ENCODE measurements at regions of chr17 and their contacts with region 1.

Region 1: GRCh38 chr17:59106463-59107305 is at the start of gene TRIM37:
- DNase-seq: peak; percentile 97 to 100 (median 98)
- ATAC-seq: peak; percentile 94
- H3K4me3 ChIP-seq: peak within 1 kb of the TSS; percentile 95
- H3K4me3 Mint-ChIP-seq: peak within 1 kb of the TSS; percentile 93
- H3K27ac ChIP-seq: peak within 1 kb of the TSS; percentile 91
- H3K27ac Mint-ChIP-seq: peak within 1 kb of the TSS; percentile 88
- H3K4me1 ChIP-seq: peaks cover 13% of the 10 kb centered on the region
- H3K4me1 Mint-ChIP-seq: peaks cover 41% of the 10 kb centered on the region
- H3K27me3 ChIP-seq: no peaks in the 10 kb centered on the region
- H3K27me3 Mint-ChIP-seq: no peaks in the 10 kb centered on the region
- CTCF ChIP-seq: no peak
- total RNA-seq, gene TRIM37: 16.8 to 18.0 TPM

Region 2: DNA sequence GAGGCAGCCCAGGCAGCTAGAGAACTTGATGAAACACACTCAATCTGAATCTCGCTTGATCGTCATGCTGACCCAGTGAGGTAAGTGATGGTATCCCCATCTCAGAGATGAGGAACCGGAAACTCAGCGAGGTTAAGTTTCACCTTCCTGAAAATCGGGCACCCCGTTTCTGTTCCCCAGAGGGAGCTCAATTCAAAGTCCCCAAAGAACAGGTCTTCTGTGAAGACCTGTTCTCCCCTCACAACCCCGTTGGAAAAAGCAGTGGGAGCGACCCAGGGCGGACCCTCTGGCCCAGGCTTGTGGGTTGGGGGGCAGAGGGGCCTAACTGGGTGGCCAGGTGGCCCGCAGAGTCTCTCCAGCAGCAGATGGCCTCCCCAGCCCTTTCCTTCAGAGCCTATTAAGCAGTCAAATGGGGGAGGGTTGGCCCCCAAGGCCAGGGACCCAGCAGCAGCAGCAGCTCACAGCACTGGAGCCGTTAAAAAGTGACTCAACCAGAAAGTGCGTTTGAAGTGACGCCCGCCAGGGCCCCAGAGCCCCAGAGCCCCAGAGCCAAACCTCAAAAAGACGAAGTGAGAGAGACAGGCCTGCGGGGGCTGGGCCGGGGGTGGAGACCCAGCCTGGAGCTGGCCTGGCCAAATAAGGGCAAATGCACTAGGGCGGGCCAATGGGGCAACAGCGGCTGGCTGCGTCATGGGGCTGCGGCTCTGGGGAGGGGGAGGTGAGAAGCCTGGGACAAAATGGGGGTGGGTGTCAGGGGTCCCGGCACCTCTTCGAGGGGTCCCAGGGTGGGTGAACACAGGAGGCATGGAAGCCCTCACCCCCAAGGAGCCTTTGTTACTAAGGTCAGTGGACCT is 768.9 kb before region 1 on chr17:
- CTCF ChIA-PET with region 1: no interaction called
- POLR2A ChIA-PET with region 1: interaction called, 3 read pairs
- intact Hi-C with region 1: loop called in 1 of 2 experiments (anchors 10 kb)
- DNase-seq: peak; percentile 78 to 96 (median 88)
- ATAC-seq: peak; percentile 73
- H3K4me3 ChIP-seq: peak overlapping the region; percentile 84
- H3K4me3 Mint-ChIP-seq: peak overlapping the region; percentile 90
- H3K27ac ChIP-seq: peak overlapping the region; percentile 97 to 98
- H3K27ac Mint-ChIP-seq: peak overlapping the region; percentile 84
- H3K4me1 ChIP-seq: peaks cover 96% of the 10 kb centered on the region
- H3K4me1 Mint-ChIP-seq: peaks cover 92% of the 10 kb centered on the region
- H3K27me3 ChIP-seq: no peaks in the 10 kb centered on the region
- H3K27me3 Mint-ChIP-seq: no peaks in the 10 kb centered on the region
- CTCF ChIP-seq: no peak

Region 3: GRCh38 chr17:58692239-58693055 is 414.2 kb before region 1 on chr17 and contains the start of gene RAD51C:
- CTCF ChIA-PET with region 1: no interaction called
- POLR2A ChIA-PET with region 1: interaction called, 6 read pairs
- intact Hi-C with region 1: loop called in 1 of 2 experiments (anchors 5 kb)
- DNase-seq: peak; percentile 70 to 92 (median 84)
- ATAC-seq: peak; percentile 96
- H3K4me3 ChIP-seq: peak within 1 kb of the TSS; percentile 79
- H3K4me3 Mint-ChIP-seq: peak within 1 kb of the TSS; percentile 93
- H3K27ac ChIP-seq: peak within 1 kb of the TSS; percentile 66 to 83
- H3K27ac Mint-ChIP-seq: peak within 1 kb of the TSS; percentile 86
- H3K4me1 ChIP-seq: peaks cover 13% of the 10 kb centered on the region
- H3K4me1 Mint-ChIP-seq: peaks cover 28% of the 10 kb centered on the region
- H3K27me3 ChIP-seq: no peaks in the 10 kb centered on the region
- H3K27me3 Mint-ChIP-seq: no peaks in the 10 kb centered on the region
- CTCF ChIP-seq: no peak
- total RNA-seq, gene RAD51C: 10.4 to 11.6 TPM

Region 4: DNA sequence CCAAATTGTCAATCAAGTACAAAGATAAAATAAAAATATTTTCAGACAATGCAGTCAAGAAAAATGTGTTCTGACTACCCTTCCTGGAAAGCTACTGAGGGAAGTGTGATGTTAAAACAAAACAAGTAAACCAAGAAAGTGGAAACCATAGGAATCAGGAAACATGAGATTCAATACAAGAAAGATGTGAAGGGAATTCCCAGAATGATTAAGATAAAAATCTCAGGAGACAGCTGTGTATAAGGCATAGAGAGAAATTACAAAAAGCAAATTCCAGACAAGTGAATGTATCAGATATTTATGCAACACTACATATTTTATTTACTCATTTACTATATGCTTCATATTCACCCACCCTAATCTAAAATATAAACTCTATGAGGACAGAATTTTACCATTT is 32.2 kb before region 1 on chr17:
- CTCF ChIA-PET with region 1: no interaction called
- POLR2A ChIA-PET with region 1: no interaction called
- intact Hi-C with region 1: no loop called
- DNase-seq: no peak
- ATAC-seq: no peak
- H3K4me3 ChIP-seq: no peak overlapping the region
- H3K4me3 Mint-ChIP-seq: no peak overlapping the region
- H3K27ac ChIP-seq: no peak overlapping the region
- H3K27ac Mint-ChIP-seq: no peak overlapping the region
- H3K4me1 ChIP-seq: no peaks in the 10 kb centered on the region
- H3K4me1 Mint-ChIP-seq: no peaks in the 10 kb centered on the region
- H3K27me3 ChIP-seq: no peaks in the 10 kb centered on the region
- H3K27me3 Mint-ChIP-seq: no peaks in the 10 kb centered on the region
- CTCF ChIP-seq: no peak

Region 5: DNA sequence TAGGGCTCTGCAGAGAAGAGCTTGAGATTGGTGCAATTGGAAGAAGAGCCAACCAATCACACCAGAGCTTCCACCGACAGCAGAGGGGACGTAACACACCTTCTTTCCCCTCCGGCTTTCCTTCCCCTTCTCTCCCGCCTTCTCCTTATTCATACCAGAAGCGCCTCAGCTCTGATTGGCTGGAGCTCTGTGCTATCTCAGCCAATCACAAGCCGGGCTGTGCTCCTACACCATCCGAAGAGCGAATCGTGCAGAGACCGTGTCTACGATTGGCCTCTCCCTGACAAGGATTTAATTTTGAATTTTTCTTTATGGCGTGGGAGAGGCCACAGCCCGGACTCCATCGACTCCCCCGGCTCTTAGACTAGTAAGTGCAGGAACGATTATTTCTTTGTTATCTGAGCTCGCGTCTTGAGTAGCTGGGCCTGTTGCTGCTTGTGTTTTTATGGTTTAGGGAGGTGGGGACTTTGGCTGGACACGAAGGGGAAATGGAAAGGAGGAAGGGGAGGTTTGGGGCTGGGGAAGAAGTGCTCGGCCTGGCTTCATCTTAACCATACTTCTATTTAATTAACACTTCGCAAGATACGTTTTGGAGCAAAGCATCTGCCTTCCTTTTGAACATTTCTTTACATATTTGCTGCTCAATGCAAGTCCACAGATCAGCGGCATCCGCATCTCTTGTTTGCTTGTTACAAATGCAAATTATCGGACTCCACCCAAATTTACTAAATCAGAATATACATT is 48.9 kb after region 1 on chr17 and contains the start of gene PRR11:
- CTCF ChIA-PET with region 1: interaction called, 4 read pairs
- POLR2A ChIA-PET with region 1: interaction called, 47 read pairs
- intact Hi-C with region 1: loop called (anchors 1 to 2 kb)
- DNase-seq: peak; percentile 81 to 99 (median 88)
- ATAC-seq: peak; percentile 84
- H3K4me3 ChIP-seq: peak within 1 kb of the TSS; percentile 87
- H3K4me3 Mint-ChIP-seq: no peak within 1 kb of the TSS
- H3K27ac ChIP-seq: peak within 1 kb of the TSS; percentile 39 to 73
- H3K27ac Mint-ChIP-seq: no peak within 1 kb of the TSS
- H3K4me1 ChIP-seq: peaks cover 27% of the 10 kb centered on the region
- H3K4me1 Mint-ChIP-seq: peaks cover 38% of the 10 kb centered on the region
- H3K27me3 ChIP-seq: no peaks in the 10 kb centered on the region
- H3K27me3 Mint-ChIP-seq: no peaks in the 10 kb centered on the region
- CTCF ChIP-seq: no peak
- total RNA-seq, gene PRR11: 0.69 to 0.92 TPM

Region 6: GRCh38 chr17:59190806-59191205 is 84.1 kb after region 1 on chr17:
- CTCF ChIA-PET with region 1: no interaction called
- POLR2A ChIA-PET with region 1: no interaction called
- intact Hi-C with region 1: no loop called
- DNase-seq: no peak
- ATAC-seq: no peak
- H3K4me3 ChIP-seq: no peak overlapping the region
- H3K4me3 Mint-ChIP-seq: no peak overlapping the region
- H3K27ac ChIP-seq: no peak overlapping the region
- H3K27ac Mint-ChIP-seq: no peak overlapping the region
- H3K4me1 ChIP-seq: no peaks in the 10 kb centered on the region
- H3K4me1 Mint-ChIP-seq: no peaks in the 10 kb centered on the region
- H3K27me3 ChIP-seq: no peaks in the 10 kb centered on the region
- H3K27me3 Mint-ChIP-seq: no peaks in the 10 kb centered on the region
- CTCF ChIP-seq: no peak

Region 7: GRCh38 chr17:59456428-59456827 is 349.7 kb after region 1 on chr17:
- CTCF ChIA-PET with region 1: no interaction called
- POLR2A ChIA-PET with region 1: no interaction called
- intact Hi-C with region 1: no loop called
- DNase-seq: no peak
- ATAC-seq: no peak
- H3K4me3 ChIP-seq: no peak overlapping the region
- H3K4me3 Mint-ChIP-seq: no peak overlapping the region
- H3K27ac ChIP-seq: no peak overlapping the region
- H3K27ac Mint-ChIP-seq: no peak overlapping the region
- H3K4me1 ChIP-seq: no peaks in the 10 kb centered on the region
- H3K4me1 Mint-ChIP-seq: no peaks in the 10 kb centered on the region
- H3K27me3 ChIP-seq: no peaks in the 10 kb centered on the region
- H3K27me3 Mint-ChIP-seq: peaks cover 5% of the 10 kb centered on the region
- CTCF ChIP-seq: no peak

Region 8: DNA sequence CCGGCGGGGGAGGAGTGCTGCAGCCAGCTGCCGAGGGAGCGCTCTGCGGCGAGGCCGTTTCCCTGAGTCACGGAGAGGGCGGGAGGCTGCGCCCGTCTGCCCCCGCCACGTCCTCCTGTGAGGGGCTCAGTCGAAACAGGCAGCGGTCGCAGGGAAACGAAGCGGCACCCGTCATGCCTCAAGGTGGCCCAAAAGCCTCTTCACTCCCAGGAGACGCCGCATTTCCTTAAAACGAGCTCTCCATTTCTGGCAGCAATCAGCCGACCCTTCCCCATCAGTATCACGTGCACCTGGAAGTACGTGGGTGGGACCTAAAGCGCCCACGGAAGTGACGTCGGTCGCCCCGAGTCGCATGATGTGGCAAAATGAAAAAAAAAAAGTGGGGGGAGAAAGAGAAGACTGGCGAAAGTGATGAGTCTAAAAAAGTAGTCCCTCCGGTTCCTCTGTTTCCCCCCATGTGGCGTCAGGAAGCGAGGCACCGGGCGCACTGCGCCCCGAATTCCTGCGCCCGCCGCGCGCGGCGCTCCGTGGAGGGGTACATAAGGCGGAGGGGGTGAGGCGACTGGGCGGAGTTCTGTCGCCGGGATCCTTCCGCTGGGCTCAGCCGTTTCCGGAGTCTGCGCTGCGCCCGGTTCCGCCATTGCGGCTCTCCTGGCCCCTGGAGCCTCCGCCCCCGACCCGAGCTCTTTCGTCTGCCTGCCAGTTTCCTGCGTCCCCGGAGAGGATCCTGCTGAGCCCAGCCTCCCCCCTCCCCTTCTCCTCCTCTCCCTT is 512.8 kb after region 1 on chr17 and contains the start of gene CLTC:
- CTCF ChIA-PET with region 1: interaction called, 3 read pairs
- POLR2A ChIA-PET with region 1: interaction called, 6 read pairs
- intact Hi-C with region 1: loop called in 1 of 2 experiments (anchors 5 kb)
- DNase-seq: peak; percentile 81 to 98 (median 88)
- ATAC-seq: peak; percentile 82
- H3K4me3 ChIP-seq: peak within 1 kb of the TSS; percentile 96
- H3K4me3 Mint-ChIP-seq: peak within 1 kb of the TSS; percentile 97
- H3K27ac ChIP-seq: peak within 1 kb of the TSS; percentile 95 to 96
- H3K27ac Mint-ChIP-seq: peak within 1 kb of the TSS; percentile 98
- H3K4me1 ChIP-seq: peaks cover 22% of the 10 kb centered on the region
- H3K4me1 Mint-ChIP-seq: peaks cover 66% of the 10 kb centered on the region
- H3K27me3 ChIP-seq: no peaks in the 10 kb centered on the region
- H3K27me3 Mint-ChIP-seq: no peaks in the 10 kb centered on the region
- CTCF ChIP-seq: no peak
- total RNA-seq, gene CLTC: 81.5 to 89.9 TPM

Region 9: GRCh38 chr17:59964482-59965328 is 858.0 kb after region 1 on chr17 and contains the start of gene RNFT1:
- CTCF ChIA-PET with region 1: no interaction called
- POLR2A ChIA-PET with region 1: interaction called, 3 read pairs
- intact Hi-C with region 1: loop called in 1 of 2 experiments (anchors 10 kb)
- DNase-seq: peak; percentile 84 to 95 (median 90)
- ATAC-seq: peak; percentile 87
- H3K4me3 ChIP-seq: peak within 1 kb of the TSS; percentile 100
- H3K4me3 Mint-ChIP-seq: peak within 1 kb of the TSS; percentile 94
- H3K27ac ChIP-seq: peak within 1 kb of the TSS; percentile 80 to 88
- H3K27ac Mint-ChIP-seq: peak within 1 kb of the TSS; percentile 89
- H3K4me1 ChIP-seq: peaks cover 16% of the 10 kb centered on the region
- H3K4me1 Mint-ChIP-seq: peaks cover 25% of the 10 kb centered on the region
- H3K27me3 ChIP-seq: no peaks in the 10 kb centered on the region
- H3K27me3 Mint-ChIP-seq: no peaks in the 10 kb centered on the region
- CTCF ChIP-seq: no peak
- total RNA-seq, gene RNFT1: 19.8 to 19.9 TPM

Region 10: DNA sequence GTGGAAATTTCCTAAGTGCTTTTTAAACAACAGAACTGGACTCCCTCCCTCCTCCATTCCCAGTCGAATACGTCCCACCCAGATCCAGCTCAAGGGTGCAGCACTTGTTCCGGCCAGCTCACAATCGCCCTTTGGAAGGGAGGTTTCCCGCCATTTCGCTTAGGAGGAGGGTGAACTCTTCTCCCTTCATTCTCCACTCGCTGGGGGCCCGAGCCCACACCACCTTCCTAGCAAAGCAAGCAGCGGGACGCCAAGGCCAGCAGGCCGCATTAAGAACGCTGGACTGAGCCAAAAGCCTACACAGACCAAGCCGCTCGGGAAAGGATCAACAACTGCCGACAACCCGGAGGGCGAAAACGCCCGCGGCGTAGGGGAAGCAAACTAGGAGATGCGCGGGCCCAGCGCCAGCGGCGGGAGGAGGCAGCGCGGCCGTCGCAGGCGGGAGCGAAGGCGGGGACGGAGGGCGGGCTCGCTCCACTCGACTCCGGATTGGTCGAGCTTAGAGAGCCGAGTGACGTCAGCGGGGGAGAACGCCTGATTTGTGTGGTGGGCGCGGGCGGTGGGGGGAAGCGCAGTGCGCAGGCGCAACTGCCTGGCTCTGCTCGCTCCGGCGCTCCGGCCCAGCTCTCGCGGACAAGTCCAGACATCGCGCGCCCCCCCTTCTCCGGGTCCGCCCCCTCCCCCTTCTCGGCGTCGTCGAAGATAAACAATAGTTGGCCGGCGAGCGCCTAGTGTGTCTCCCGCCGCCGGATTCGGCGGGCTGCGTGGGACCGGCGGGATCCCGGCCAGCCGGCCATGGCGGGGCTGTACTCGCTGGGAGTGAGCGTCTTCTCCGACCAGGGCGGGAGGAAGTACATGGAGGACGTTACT is 1493.2 kb after region 1 on chr17 and contains the start of gene PPM1D:
- CTCF ChIA-PET with region 1: no interaction called
- POLR2A ChIA-PET with region 1: no interaction called
- intact Hi-C with region 1: loop called in 1 of 2 experiments (anchors 5 kb)
- DNase-seq: peak; percentile 95 to 100 (median 97)
- ATAC-seq: peak; percentile 95
- H3K4me3 ChIP-seq: peak within 1 kb of the TSS; percentile 87
- H3K4me3 Mint-ChIP-seq: peak within 1 kb of the TSS; percentile 98
- H3K27ac ChIP-seq: peak within 1 kb of the TSS; percentile 84 to 87
- H3K27ac Mint-ChIP-seq: peak within 1 kb of the TSS; percentile 94
- H3K4me1 ChIP-seq: peaks cover 23% of the 10 kb centered on the region
- H3K4me1 Mint-ChIP-seq: peaks cover 50% of the 10 kb centered on the region
- H3K27me3 ChIP-seq: no peaks in the 10 kb centered on the region
- H3K27me3 Mint-ChIP-seq: no peaks in the 10 kb centered on the region
- CTCF ChIP-seq: no peak
- total RNA-seq, gene PPM1D: 18.1 to 18.3 TPM